H1 (cell line): ENCODE measurements at regions of chr20 and their contacts with region 1.

Region 1: DNA sequence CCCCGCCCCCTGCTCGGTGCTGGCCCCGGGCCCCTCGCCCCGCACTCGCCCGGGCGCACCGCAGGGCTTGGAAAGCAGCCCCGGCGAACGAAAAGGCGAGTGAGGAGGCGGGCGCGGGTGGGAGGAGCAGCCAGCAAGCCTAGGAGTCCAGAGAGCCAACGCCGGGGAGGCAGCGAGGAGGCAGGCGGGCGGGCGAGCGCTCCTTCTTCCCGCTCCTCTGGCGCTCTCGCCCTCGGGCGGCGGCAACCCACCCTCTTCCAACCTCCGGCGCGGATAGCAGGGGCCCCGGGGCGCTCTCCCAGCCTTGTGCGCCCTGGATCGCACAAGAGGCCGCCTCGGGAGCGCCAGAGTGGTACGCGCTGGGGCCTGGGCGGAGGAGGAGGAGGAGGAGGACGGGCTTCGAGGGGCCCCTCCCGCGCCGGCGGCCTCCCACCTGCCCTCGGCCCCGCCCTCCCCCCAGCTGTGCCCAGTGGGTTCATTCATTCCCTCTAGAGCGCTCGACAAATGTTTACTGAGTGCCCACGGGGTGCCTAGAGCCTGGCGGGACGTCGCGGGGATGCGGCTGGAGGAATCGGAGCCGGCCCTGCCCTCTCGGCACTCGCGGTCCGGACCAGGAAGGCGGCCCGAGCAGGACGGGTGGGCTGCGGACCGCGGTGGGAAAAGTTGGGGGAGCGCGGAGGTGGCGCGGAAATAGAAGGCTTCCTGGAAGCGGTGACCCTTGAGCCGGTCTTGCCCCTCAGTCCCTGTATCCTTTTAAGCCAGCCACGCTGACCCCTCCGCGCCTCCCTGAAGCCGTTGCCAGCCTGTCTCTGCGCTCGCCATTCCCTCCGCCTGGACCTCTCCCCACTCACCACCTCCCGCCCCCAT is at the start of gene BMP7:
- DNase-seq: peak in 1 of 2 experiments; percentile 87
- H3K4me3 ChIP-seq: peak within 1 kb of the TSS; percentile 65 to 78 (median 74)
- H3K27ac ChIP-seq: no peak within 1 kb of the TSS
- H3K4me1 ChIP-seq: peaks cover 23 to 46% (median 39%) of the 10 kb centered on the region in 4 experiments
- H3K27me3 ChIP-seq: peaks cover 33 to 83% (median 75%) of the 10 kb centered on the region in 4 experiments
- CTCF ChIP-seq: no peak
- EP300 ChIP-seq: no peak
- POLR2A ChIP-seq: no peak
- RAD21 ChIP-seq: no peak
- total RNA-seq, gene BMP7: 7.2 and 9.2 TPM in 2 replicates

Region 2: GRCh38 chr20:57250607-57251343 is 15.7 kb before region 1 on chr20:
- CTCF ChIA-PET with region 1: interaction called, 33 read pairs
- POLR2A ChIA-PET with region 1: interaction called, 8 read pairs
- DNase-seq: no peak
- H3K4me3 ChIP-seq: no peak overlapping the region
- H3K27ac ChIP-seq: no peak overlapping the region
- H3K4me1 ChIP-seq: peaks cover 0 to 8% (median 4%) of the 10 kb centered on the region in 4 experiments; a peak in 5 of 7 replicates
- H3K27me3 ChIP-seq: no peaks in the 10 kb centered on the region; a peak in 1 of 7 replicates
- CTCF ChIP-seq: no peak
- EP300 ChIP-seq: no peak
- POLR2A ChIP-seq: no peak
- RAD21 ChIP-seq: no peak

Region 3: DNA sequence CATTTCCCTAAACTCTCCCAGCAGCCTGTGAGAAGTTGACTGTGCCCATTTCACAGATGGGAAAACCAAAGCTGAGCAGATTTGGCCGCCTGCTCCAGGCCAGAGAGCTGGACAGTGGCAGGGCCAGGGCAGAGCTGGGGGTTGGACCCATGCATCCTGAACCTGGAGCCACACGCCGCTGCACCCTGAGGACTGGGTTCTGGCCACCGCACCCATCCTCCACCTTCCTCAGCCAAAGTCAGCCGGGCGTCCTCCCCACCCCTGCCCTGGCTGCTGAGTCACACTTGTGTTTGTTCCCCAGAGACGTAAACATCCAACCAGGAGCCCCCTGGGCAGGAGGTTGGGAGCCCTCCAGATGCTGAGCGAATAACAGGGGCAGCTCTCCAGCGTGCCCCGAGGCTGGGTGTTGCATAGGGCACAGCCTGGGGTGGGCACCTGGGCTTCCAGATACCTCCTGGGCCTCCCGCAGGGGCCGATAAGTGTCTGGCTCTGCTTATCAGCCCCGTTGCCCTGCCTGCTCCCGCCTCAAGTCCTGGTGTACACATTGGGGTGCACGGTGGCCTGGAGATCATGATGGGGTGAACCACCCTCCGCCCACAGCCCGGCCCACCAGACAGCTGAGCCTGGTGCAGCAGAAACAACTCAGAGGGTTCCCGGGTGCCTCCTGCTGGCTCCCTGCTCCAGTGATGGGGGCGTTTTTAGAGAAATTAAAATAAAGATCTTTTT is 148.5 kb after region 1 on chr20:
- CTCF ChIA-PET with region 1: no interaction called
- POLR2A ChIA-PET with region 1: no interaction called
- DNase-seq: no peak
- H3K4me3 ChIP-seq: no peak overlapping the region
- H3K27ac ChIP-seq: no peak overlapping the region
- H3K4me1 ChIP-seq: no peaks in the 10 kb centered on the region
- H3K27me3 ChIP-seq: no peaks in the 10 kb centered on the region
- CTCF ChIP-seq: no peak
- EP300 ChIP-seq: no peak
- POLR2A ChIP-seq: no peak
- RAD21 ChIP-seq: no peak